ENCODE measurements at regions of chr1 and their contacts with region 1.

Region 1: GRCh38 chr1:23530747-23531561 is at the start of gene E2F2:
- DNase-seq: peak; percentile 76 to 86
- ATAC-seq: peak; percentile 77 to 87
- H3K4me3 ChIP-seq: peak within 1 kb of the TSS; percentile 50 to 84 (median 64)
- H3K27ac ChIP-seq: peak within 1 kb of the TSS in 1 of 4 donors; percentile 52
- H3K4me1 ChIP-seq: peaks cover 23 to 25% of the 10 kb centered on the region in 2 donors
- H3K27me3 ChIP-seq: peaks cover 0 to 7% (median 5%) of the 10 kb centered on the region in 3 donors
- CTCF ChIP-seq: peak in 1 of 5 experiments; percentile 27
- POLR2A ChIP-seq: no peak
- total RNA-seq, gene E2F2: 0.40 TPM in 1 of 4 donors, not detected in the others

Region 2: GRCh38 chr1:23422241-23423030 is 108.5 kb before region 1 on chr1:
- in situ Hi-C with region 1: no loop called
- intact Hi-C with region 1: loop called (anchors 5 kb)
- DNase-seq: peak; percentile 33 to 65
- ATAC-seq: no peak
- H3K4me3 ChIP-seq: peak overlapping the region in 2 of 4 donors; percentile 68 to 72
- H3K27ac ChIP-seq: peak overlapping the region; percentile 93 to 96 (median 94)
- H3K4me1 ChIP-seq: peaks cover 66 to 79% of the 10 kb centered on the region in 2 donors
- H3K27me3 ChIP-seq: no peaks in the 10 kb centered on the region
- CTCF ChIP-seq: no peak
- POLR2A ChIP-seq: no peak

Region 3: DNA sequence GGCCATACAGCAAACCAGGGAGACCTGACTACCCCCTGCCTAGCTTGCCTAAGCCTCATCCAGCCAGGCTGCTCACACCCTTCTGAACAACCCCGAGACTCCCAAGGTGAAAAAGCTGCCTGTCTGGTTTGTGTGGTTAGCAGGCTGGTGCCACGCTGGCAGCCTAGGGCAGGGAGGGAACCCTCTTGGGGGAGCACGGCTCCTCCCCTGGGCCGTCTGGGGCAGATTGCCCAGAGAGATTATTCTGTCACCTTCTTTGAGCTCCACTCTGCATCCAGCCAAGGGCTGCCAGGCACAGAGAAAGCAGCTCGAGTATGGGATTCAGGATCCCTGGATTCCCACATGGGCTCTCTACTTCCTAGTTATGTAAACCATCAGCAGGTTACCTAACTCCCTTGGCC is 78.9 kb before region 1 on chr1:
- in situ Hi-C with region 1: no loop called
- intact Hi-C with region 1: no loop called
- DNase-seq: peak in 1 of 2 donors; percentile 73
- ATAC-seq: peak; percentile 18 to 47
- H3K4me3 ChIP-seq: no peak overlapping the region
- H3K27ac ChIP-seq: peak overlapping the region; percentile 40 to 78 (median 69)
- H3K4me1 ChIP-seq: peaks cover 50 to 52% of the 10 kb centered on the region in 2 donors
- H3K27me3 ChIP-seq: no peaks in the 10 kb centered on the region
- CTCF ChIP-seq: no peak
- POLR2A ChIP-seq: no peak

Measured in gastrocnemius medialis (tissue), 4 donors.